ENCODE measurements at regions of chr1 and their contacts with region 1.

Region 1: DNA sequence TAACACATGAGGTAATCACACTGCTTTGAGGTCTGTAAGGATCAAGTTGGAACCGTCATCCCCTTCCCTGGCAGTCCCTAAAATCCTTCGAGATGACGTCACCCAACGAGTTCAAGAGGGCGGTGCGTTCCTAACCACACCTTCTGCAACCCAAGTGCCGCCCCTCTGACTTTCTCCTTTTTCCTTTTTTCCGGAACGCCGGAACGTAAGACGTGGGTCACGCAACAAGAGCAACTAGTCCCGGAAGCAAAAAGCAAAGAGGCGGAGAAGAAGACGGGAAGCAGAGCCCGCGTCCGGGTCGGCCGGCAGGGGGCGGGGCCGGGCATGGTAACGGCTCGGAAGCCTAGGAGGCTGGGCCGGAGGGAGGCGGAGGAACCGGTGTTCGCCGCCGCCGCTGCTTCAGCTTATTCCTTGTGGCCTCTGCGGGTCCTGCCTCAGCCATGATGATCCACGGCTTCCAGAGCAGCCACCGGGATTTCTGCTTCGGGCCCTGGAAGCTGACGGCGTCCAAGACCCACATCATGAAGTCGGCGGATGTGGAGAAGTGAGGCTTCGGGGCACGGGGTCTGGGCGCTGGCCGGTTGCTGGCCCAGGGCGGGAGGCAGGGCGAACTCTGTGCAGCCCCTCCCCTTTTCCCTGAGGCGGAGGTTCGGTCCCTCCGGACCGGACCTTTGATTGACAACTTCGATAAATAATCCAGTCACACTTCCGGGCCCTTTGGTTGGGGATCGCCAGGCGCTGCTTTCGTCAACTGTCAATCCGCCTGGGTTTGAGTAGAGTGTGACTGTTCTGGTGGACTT is at the start of gene TIPRL:
- DNase-seq: peak; percentile 89 to 96
- ATAC-seq: peak; percentile 82 to 93 (median 84)
- H3K4me3 ChIP-seq: peak within 1 kb of the TSS; percentile 91
- H3K4me3 Mint-ChIP-seq: no peak within 1 kb of the TSS
- H3K27ac ChIP-seq: peak within 1 kb of the TSS; percentile 94
- H3K27ac Mint-ChIP-seq: no peak within 1 kb of the TSS
- H3K4me1 ChIP-seq: peaks cover 9% of the 10 kb centered on the region
- H3K4me1 Mint-ChIP-seq: peaks cover 0 to 3% of the 10 kb centered on the region in 2 donors
- H3K27me3 ChIP-seq: no peaks in the 10 kb centered on the region
- H3K27me3 Mint-ChIP-seq: peaks cover 9 to 15% of the 10 kb centered on the region in 2 donors
- CTCF ChIP-seq: peak; percentile 72
- total RNA-seq, gene TIPRL: 23.5 to 27.4 (median 25.6) TPM

Region 2: GRCh38 chr1:167936068-167936929 is 242.5 kb before region 1 on chr1 and contains the start of gene DCAF6:
- intact Hi-C with region 1: loop called (anchors 2 kb)
- DNase-seq: peak; percentile 95 to 99
- ATAC-seq: peak; percentile 81 to 93 (median 84)
- H3K4me3 ChIP-seq: peak within 1 kb of the TSS; percentile 90
- H3K4me3 Mint-ChIP-seq: peak within 1 kb of the TSS; percentile 93
- H3K27ac ChIP-seq: peak within 1 kb of the TSS; percentile 95
- H3K27ac Mint-ChIP-seq: peak within 1 kb of the TSS; percentile 93 to 98
- H3K4me1 ChIP-seq: peaks cover 8% of the 10 kb centered on the region
- H3K4me1 Mint-ChIP-seq: peaks cover 34 to 41% of the 10 kb centered on the region in 2 donors
- H3K27me3 ChIP-seq: no peaks in the 10 kb centered on the region
- H3K27me3 Mint-ChIP-seq: no peaks in the 10 kb centered on the region
- CTCF ChIP-seq: no peak
- total RNA-seq, gene DCAF6: 21.8 to 31.8 (median 27.8) TPM

Region 3: GRCh38 chr1:168225476-168226190 is 46.8 kb after region 1 on chr1 and contains the start of gene SFT2D2:
- intact Hi-C with region 1: loop called (anchors 2 kb)
- DNase-seq: peak; percentile 83 to 88
- ATAC-seq: peak; percentile 95 to 97 (median 96)
- H3K4me3 ChIP-seq: peak within 1 kb of the TSS; percentile 91
- H3K4me3 Mint-ChIP-seq: peak within 1 kb of the TSS; percentile 90
- H3K27ac ChIP-seq: peak within 1 kb of the TSS; percentile 81
- H3K27ac Mint-ChIP-seq: peak within 1 kb of the TSS; percentile 87 to 94
- H3K4me1 ChIP-seq: peaks cover 38% of the 10 kb centered on the region
- H3K4me1 Mint-ChIP-seq: peaks cover 47 to 54% of the 10 kb centered on the region in 2 donors
- H3K27me3 ChIP-seq: no peaks in the 10 kb centered on the region
- H3K27me3 Mint-ChIP-seq: no peaks in the 10 kb centered on the region
- CTCF ChIP-seq: no peak
- total RNA-seq, gene SFT2D2: 91.8 to 118 (median 116) TPM

Region 4: GRCh38 chr1:168234846-168235547 is 56.2 kb after region 1 on chr1:
- intact Hi-C with region 1: loop called (anchors 2 kb)
- DNase-seq: peak; percentile 22 to 69
- ATAC-seq: peak; percentile 88 to 98 (median 97)
- H3K4me3 ChIP-seq: no peak overlapping the region
- H3K4me3 Mint-ChIP-seq: no peak overlapping the region
- H3K27ac ChIP-seq: no peak overlapping the region
- H3K27ac Mint-ChIP-seq: peak overlapping the region; percentile 65 to 71
- H3K4me1 ChIP-seq: peaks cover 3% of the 10 kb centered on the region
- H3K4me1 Mint-ChIP-seq: peaks cover 61 to 71% of the 10 kb centered on the region in 2 donors
- H3K27me3 ChIP-seq: no peaks in the 10 kb centered on the region
- H3K27me3 Mint-ChIP-seq: no peaks in the 10 kb centered on the region
- CTCF ChIP-seq: peak; percentile 70

Region 5: DNA sequence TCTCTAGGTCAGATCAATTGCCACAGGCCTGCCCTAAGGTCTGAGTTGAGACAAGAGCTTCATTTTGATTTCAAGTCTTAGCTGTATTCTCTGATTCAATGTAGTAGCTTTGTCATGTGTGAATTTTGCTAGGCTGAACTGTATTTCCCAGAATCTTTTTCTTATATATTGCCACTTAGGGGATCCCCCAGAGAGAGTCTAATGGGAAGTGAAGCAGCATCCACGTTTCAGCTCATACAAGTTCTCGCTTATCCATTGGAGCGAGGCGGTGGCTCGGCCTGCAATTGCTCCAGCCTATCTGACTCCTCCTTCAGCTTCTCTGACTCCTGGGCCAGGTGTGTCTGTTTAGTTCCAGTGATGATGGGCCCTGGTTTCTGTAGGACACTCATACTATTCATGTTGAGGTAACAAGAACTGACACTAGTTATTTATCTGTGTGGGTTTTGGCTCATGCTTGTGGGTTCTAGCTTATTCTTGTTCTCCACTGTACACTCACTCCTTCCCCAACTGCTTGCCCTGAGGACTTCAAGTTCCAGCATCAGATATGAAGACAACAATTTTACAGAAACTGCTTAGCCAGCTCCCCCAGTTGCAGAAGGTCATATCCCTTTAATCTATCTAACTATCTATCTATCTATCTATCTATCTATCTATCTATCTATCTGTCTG is 150.0 kb after region 1 on chr1:
- intact Hi-C with region 1: no loop called
- DNase-seq: no peak
- ATAC-seq: no peak
- H3K4me3 ChIP-seq: no peak overlapping the region
- H3K4me3 Mint-ChIP-seq: no peak overlapping the region
- H3K27ac ChIP-seq: no peak overlapping the region
- H3K27ac Mint-ChIP-seq: no peak overlapping the region
- H3K4me1 ChIP-seq: no peaks in the 10 kb centered on the region
- H3K4me1 Mint-ChIP-seq: no peaks in the 10 kb centered on the region
- H3K27me3 ChIP-seq: no peaks in the 10 kb centered on the region
- H3K27me3 Mint-ChIP-seq: no peaks in the 10 kb centered on the region
- CTCF ChIP-seq: no peak

Measured in natural killer cell (primary cell).